ENCODE measurements at regions of chr1 and their contacts with region 1.

Region 1: GRCh38 chr1:70221241-70222121 is at the start of gene SRSF11:
- DNase-seq: peak; percentile 95
- H3K4me3 ChIP-seq: peak within 1 kb of the TSS; percentile 55 to 94 (median 92)
- H3K27ac ChIP-seq: peak within 1 kb of the TSS; percentile 84
- H3K4me1 ChIP-seq: peaks cover 25% of the 10 kb centered on the region
- H3K27me3 ChIP-seq: no peaks in the 10 kb centered on the region
- CTCF ChIP-seq: no peak
- POLR2A ChIP-seq: peak; percentile 73
- total RNA-seq, gene SRSF11: 168 and 177 TPM in 2 replicates

Region 2: DNA sequence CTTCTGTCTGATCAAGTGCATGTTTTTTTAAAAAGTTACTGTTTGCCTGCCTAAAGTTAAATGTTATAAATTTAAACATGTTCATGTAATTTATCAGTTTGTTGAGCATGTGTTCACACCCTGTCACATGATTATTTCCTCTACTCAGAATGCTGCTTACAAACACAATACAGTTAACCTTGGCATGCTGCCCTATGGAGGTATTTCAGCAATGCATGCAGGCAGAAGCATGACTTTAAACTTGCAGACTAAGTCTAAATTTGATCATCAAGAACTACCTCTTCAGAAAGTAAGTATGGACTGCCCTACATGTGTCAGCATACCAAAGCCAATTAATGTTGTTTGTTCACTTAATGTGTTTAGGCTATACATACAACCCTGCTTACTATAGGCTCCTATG is 177.7 kb before region 1 on chr1:
- CTCF ChIA-PET with region 1: no interaction called
- POLR2A ChIA-PET with region 1: no interaction called
- dilution Hi-C with region 1: no loop called
- intact Hi-C with region 1: loop called (anchors 5 kb)
- DNase-seq: peak; percentile 84
- H3K4me3 ChIP-seq: no peak overlapping the region
- H3K27ac ChIP-seq: peak overlapping the region; percentile 77
- H3K4me1 ChIP-seq: peaks cover 20% of the 10 kb centered on the region
- H3K27me3 ChIP-seq: no peaks in the 10 kb centered on the region
- CTCF ChIP-seq: no peak
- POLR2A ChIP-seq: no peak

Region 3: GRCh38 chr1:70134148-70134547 is 87.3 kb before region 1 on chr1:
- CTCF ChIA-PET with region 1: no interaction called
- POLR2A ChIA-PET with region 1: no interaction called
- dilution Hi-C with region 1: no loop called
- intact Hi-C with region 1: loop called (anchors 2 kb)
- DNase-seq: no peak
- H3K4me3 ChIP-seq: no peak overlapping the region
- H3K27ac ChIP-seq: no peak overlapping the region
- H3K4me1 ChIP-seq: no peaks in the 10 kb centered on the region
- H3K27me3 ChIP-seq: no peaks in the 10 kb centered on the region
- CTCF ChIP-seq: no peak
- POLR2A ChIP-seq: no peak

Region 4: DNA sequence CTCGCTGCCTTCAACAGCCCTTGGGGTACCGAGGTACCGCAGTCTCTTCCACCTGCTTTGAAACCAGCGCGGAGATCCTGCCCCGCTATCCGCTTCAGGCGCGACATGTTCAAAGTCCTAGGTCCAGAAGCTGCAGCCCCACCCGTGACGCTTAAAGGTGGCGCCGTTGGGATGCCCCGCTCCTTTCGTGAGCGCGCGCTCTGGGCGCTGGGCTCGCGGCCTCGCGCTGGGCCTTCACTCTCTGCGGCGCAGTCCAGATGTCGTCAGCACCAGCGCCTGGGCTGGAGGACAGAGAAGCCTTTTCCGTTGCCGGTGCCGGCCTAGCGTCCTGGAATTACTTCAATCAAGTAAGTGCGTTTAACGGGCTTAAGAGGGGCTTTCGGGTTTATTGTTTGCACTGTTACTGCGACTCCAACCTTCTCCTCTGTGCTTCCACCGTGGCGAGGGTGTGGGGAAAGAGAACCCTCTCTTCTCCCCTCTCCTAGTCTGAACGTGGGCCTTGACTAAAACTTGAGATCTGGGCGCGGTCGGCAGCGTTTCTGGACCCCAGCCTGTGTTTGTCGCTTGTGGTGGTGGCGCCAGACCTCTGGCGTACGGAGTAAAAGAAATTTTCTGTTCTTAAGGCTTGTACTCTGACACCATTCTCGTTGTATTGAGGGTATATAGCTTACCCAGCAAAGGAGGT is 15.9 kb before region 1 on chr1 and contains the start of gene LRRC40:
- CTCF ChIA-PET with region 1: interaction called, 7 read pairs
- POLR2A ChIA-PET with region 1: interaction called, 4 read pairs
- dilution Hi-C with region 1: no loop called
- intact Hi-C with region 1: loop called (anchors 1 kb)
- DNase-seq: peak; percentile 99
- H3K4me3 ChIP-seq: peak within 1 kb of the TSS; percentile 63 to 96 (median 79)
- H3K27ac ChIP-seq: peak within 1 kb of the TSS; percentile 89
- H3K4me1 ChIP-seq: peaks cover 32% of the 10 kb centered on the region
- H3K27me3 ChIP-seq: no peaks in the 10 kb centered on the region
- CTCF ChIP-seq: no peak
- POLR2A ChIP-seq: peak; percentile 77
- total RNA-seq, gene LRRC40: 20.6 and 21.1 TPM in 2 replicates

Region 5: GRCh38 chr1:70210820-70211219 is 10.7 kb before region 1 on chr1:
- CTCF ChIA-PET with region 1: interaction called, 7 read pairs
- POLR2A ChIA-PET with region 1: interaction called, 4 read pairs
- dilution Hi-C with region 1: no loop called
- intact Hi-C with region 1: loop called (anchors 1 kb)
- DNase-seq: peak; percentile 42
- H3K4me3 ChIP-seq: no peak overlapping the region
- H3K27ac ChIP-seq: peak overlapping the region; percentile 18
- H3K4me1 ChIP-seq: peaks cover 29% of the 10 kb centered on the region
- H3K27me3 ChIP-seq: no peaks in the 10 kb centered on the region
- CTCF ChIP-seq: no peak
- POLR2A ChIP-seq: no peak

Region 6: DNA sequence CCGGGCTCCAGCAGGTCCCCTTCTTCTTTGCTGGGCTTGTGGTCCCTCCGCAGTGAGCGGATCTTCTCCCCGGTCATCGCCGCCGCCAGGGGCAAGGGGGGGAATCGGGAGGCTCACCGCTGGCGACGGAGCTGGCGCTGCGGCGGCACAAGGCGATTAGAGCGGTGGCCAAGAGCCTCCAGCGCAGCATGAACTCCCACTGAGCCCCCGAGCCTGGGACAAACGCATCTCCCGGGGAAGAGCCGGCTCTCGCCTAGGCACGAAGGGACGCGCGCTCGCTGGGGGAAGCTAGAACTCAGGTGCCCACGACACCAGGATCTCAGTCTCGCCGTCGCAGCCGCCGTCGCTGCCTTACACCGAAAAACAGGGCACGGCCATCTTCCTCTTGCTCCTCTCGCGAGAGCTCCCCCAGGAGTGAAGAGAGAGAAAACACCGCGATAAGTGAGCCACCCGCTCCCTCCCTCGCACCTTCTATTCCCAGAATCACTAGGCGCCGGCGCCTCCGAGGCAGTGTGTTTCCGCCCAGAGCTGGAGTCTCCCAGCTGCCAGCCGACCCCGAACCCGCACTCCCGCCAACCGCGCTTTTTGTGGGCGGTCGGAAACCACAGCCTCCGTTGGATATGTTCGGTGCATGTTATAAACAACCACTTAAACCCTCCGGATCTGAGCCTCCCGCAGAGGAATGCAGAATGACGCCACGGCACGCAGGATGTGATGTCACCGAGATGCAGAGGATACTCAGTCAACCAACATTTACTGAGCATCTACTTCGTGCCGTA is 133.0 kb after region 1 on chr1 and contains the start of gene ANKRD13C:
- CTCF ChIA-PET with region 1: interaction called, 3 read pairs
- POLR2A ChIA-PET with region 1: no interaction called
- dilution Hi-C with region 1: no loop called
- intact Hi-C with region 1: loop called (anchors 1 kb)
- DNase-seq: peak; percentile 97
- H3K4me3 ChIP-seq: peak within 1 kb of the TSS; percentile 61 to 83 (median 83)
- H3K27ac ChIP-seq: peak within 1 kb of the TSS; percentile 83
- H3K4me1 ChIP-seq: peaks cover 11% of the 10 kb centered on the region
- H3K27me3 ChIP-seq: no peaks in the 10 kb centered on the region
- CTCF ChIP-seq: peak in 1 of 2 donors; percentile 16
- POLR2A ChIP-seq: peak; percentile 84
- total RNA-seq, gene ANKRD13C: 17.3 and 17.6 TPM in 2 replicates

Measured in endothelial cell of umbilical vein (primary cell).